CD8-positive, alpha-beta T cell (primary cell): ENCODE measurements at regions of chr14 and their contacts with region 1.

Region 1: GRCh38 chr14:106530423-106531107 is 1004.2 kb downstream of the TMEM121 start:
- DNase-seq: peak in 6 of 9 experiments; percentile 33 to 72 (median 62)
- ATAC-seq: peak; percentile 95
- H3K4me3 ChIP-seq: no peak overlapping the region
- H3K4me3 Mint-ChIP-seq: no peak overlapping the region
- H3K27ac ChIP-seq: no peak overlapping the region
- H3K27ac Mint-ChIP-seq: no peak overlapping the region
- H3K4me1 ChIP-seq: no peaks in the 10 kb centered on the region
- H3K4me1 Mint-ChIP-seq: peaks cover 3% of the 10 kb centered on the region
- H3K27me3 ChIP-seq: no peaks in the 10 kb centered on the region
- H3K27me3 Mint-ChIP-seq: peaks cover 13% of the 10 kb centered on the region
- CTCF ChIP-seq: peak; percentile 53

Region 2: DNA sequence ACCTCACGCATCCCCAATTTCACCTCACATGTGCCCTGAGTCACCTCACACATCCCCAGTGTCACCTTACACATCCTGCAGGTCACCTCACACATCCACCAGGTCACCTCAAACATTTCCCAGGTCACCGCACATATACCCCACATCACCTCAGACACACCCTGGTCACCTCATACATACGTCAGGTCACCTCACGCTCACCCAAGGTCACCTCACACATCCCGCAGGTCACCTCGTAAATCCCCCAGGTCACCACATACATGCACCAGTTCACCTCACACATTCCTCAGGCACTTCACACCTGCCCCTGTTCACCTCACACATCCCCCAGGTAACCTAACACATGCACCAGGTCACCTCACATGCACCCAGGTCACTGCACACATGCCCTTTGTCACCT is 140.2 kb before region 1 on chr14:
- CTCF ChIA-PET with region 1: no interaction called
- POLR2A ChIA-PET with region 1: no interaction called
- intact Hi-C with region 1: no loop called
- DNase-seq: no peak
- ATAC-seq: peak; percentile 51
- H3K4me3 ChIP-seq: no peak overlapping the region
- H3K4me3 Mint-ChIP-seq: no peak overlapping the region
- H3K27ac ChIP-seq: no peak overlapping the region
- H3K27ac Mint-ChIP-seq: no peak overlapping the region
- H3K4me1 ChIP-seq: no peaks in the 10 kb centered on the region
- H3K4me1 Mint-ChIP-seq: peaks cover 34% of the 10 kb centered on the region
- H3K27me3 ChIP-seq: peaks cover 0 to 5% of the 10 kb centered on the region in 2 experiments
- H3K27me3 Mint-ChIP-seq: peaks cover 14% of the 10 kb centered on the region
- CTCF ChIP-seq: no peak

Region 3: DNA sequence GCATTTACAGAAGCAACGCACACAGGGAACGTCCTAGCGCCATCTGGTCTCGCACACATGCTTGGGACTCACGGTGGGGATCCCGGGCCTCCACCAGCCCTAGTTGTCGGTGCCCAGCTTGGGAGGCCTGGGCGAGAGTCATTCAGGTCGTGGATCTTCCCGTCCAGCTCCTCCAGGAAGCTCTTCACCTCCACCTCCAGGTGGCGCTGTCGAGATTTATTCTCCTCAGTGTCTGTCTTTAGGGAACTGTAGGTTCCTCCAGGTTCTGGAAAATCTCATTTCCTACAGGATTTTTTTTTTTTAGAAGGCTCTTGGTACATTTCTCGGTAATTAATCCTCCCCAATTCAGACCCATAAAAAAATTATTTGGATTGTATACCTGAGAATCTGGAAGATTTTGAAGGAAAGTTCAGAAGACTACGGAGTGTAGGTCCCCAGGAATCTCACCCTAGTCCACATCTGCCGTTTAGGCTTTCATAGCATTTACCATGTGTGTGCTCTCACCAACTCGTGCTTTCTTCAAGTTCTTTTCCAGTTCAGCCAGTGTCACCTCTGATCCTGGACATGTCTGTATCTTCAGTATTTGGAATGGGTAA is 94.2 kb before region 1 on chr14:
- CTCF ChIA-PET with region 1: no interaction called
- POLR2A ChIA-PET with region 1: no interaction called
- intact Hi-C with region 1: no loop called
- DNase-seq: peak in 8 of 9 experiments; percentile 34 to 86 (median 62)
- ATAC-seq: no peak
- H3K4me3 ChIP-seq: no peak overlapping the region
- H3K4me3 Mint-ChIP-seq: no peak overlapping the region
- H3K27ac ChIP-seq: no peak overlapping the region
- H3K27ac Mint-ChIP-seq: no peak overlapping the region
- H3K4me1 ChIP-seq: no peaks in the 10 kb centered on the region
- H3K4me1 Mint-ChIP-seq: no peaks in the 10 kb centered on the region
- H3K27me3 ChIP-seq: peaks cover 0 to 4% of the 10 kb centered on the region in 2 experiments
- H3K27me3 Mint-ChIP-seq: no peaks in the 10 kb centered on the region
- CTCF ChIP-seq: no peak

Region 4: GRCh38 chr14:106491851-106492250 is 38.7 kb before region 1 on chr14:
- CTCF ChIA-PET with region 1: interaction called, 4 read pairs
- POLR2A ChIA-PET with region 1: no interaction called
- intact Hi-C with region 1: loop called in 1 of 2 experiments (anchors 10 kb)
- DNase-seq: peak in 1 of 9 experiments; percentile 35
- ATAC-seq: no peak
- H3K4me3 ChIP-seq: no peak overlapping the region
- H3K4me3 Mint-ChIP-seq: no peak overlapping the region
- H3K27ac ChIP-seq: no peak overlapping the region
- H3K27ac Mint-ChIP-seq: no peak overlapping the region
- H3K4me1 ChIP-seq: peaks cover 6% of the 10 kb centered on the region
- H3K4me1 Mint-ChIP-seq: peaks cover 13% of the 10 kb centered on the region
- H3K27me3 ChIP-seq: no peaks in the 10 kb centered on the region
- H3K27me3 Mint-ChIP-seq: no peaks in the 10 kb centered on the region
- CTCF ChIP-seq: peak; percentile 49

Region 5: DNA sequence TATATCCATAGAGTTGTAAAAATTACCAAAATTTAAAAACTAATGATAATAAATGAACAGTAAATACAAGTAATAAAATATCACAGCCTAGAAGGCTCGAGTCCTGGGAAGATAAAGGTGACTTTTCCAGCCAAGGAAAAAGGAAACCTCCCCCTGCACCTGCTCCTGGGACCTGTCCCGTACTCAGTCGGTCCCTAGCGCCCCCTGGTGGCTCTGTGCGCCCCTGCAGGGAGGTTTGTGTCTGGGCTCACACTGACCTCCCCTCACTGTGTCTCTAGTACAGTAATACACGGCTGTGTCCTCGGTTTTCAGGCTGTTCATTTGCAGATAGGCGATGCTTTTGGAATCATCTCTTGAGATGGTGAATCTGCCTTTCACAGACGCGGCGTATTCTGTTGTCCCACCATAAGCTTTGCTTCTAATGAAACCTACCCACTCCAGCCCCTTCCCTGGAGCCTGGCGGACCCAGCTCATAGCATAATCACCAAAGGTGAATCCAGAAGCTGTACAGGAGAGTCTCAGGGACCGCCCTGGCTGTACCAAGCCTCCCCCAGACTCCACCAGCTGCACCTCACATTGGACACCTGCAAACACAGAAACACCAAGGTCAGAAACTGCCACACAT is 26.2 kb after region 1 on chr14:
- CTCF ChIA-PET with region 1: interaction called, 6 read pairs
- POLR2A ChIA-PET with region 1: no interaction called
- intact Hi-C with region 1: loop called in 1 of 2 experiments (anchors 1 kb)
- DNase-seq: peak; percentile 54 to 85 (median 73)
- ATAC-seq: peak; percentile 48
- H3K4me3 ChIP-seq: no peak overlapping the region
- H3K4me3 Mint-ChIP-seq: no peak overlapping the region
- H3K27ac ChIP-seq: no peak overlapping the region
- H3K27ac Mint-ChIP-seq: no peak overlapping the region
- H3K4me1 ChIP-seq: no peaks in the 10 kb centered on the region
- H3K4me1 Mint-ChIP-seq: no peaks in the 10 kb centered on the region
- H3K27me3 ChIP-seq: no peaks in the 10 kb centered on the region
- H3K27me3 Mint-ChIP-seq: peaks cover 14% of the 10 kb centered on the region
- CTCF ChIP-seq: peak; percentile 98